H1 (cell line): ENCODE measurements at regions of chr22 and their contacts with region 1.

Region 1: DNA sequence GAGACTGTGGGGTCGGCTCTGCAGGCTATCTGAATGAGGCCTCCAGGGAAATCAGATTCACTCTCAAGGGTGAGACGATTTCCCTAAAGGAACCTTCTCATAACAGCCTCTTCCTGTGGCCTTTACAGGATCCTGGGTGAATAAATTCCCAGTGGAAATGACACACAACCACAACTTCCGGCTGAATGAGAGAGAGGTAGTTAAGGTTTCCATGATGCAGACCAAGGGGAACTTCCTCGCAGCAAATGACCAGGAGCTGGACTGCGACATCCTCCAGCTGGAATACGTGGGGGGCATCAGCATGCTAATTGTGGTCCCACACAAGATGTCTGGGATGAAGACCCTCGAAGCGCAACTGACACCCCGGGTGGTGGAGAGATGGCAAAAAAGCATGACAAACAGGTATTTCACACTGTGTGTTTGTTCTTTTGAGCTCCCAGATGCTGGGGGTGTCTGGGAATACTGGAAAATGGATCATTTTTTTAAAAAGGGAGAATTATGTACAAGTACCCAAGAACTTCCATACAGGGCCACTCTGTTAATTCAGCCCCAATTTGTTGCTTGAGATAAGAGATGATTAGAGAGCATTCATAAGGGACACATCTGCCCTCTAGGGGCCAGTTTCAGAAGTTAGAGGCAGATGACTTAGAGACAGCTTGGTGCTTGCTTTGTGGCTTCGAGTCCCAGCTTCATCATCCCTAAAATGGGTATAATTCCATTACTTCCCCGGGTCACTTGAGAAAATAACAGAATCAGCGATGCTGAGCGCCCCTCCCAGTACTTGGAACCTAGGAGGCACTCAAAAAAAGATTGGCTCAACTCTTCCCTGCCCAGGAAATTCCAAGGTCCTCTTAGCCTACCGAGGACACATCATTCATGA is 10.2 kb downstream of the SERPIND1 start:
- DNase-seq: peak in 1 of 2 experiments; percentile 56
- H3K4me3 ChIP-seq: no peak overlapping the region
- H3K27ac ChIP-seq: no peak overlapping the region
- H3K4me1 ChIP-seq: peaks cover 5 to 11% (median 6%) of the 10 kb centered on the region in 4 experiments; a peak in 5 of 7 replicates
- H3K27me3 ChIP-seq: no peaks in the 10 kb centered on the region
- CTCF ChIP-seq: peak; percentile 8 to 81 (median 73)
- EP300 ChIP-seq: no peak
- POLR2A ChIP-seq: no peak
- RAD21 ChIP-seq: peak; percentile 55 to 71

Region 2: DNA sequence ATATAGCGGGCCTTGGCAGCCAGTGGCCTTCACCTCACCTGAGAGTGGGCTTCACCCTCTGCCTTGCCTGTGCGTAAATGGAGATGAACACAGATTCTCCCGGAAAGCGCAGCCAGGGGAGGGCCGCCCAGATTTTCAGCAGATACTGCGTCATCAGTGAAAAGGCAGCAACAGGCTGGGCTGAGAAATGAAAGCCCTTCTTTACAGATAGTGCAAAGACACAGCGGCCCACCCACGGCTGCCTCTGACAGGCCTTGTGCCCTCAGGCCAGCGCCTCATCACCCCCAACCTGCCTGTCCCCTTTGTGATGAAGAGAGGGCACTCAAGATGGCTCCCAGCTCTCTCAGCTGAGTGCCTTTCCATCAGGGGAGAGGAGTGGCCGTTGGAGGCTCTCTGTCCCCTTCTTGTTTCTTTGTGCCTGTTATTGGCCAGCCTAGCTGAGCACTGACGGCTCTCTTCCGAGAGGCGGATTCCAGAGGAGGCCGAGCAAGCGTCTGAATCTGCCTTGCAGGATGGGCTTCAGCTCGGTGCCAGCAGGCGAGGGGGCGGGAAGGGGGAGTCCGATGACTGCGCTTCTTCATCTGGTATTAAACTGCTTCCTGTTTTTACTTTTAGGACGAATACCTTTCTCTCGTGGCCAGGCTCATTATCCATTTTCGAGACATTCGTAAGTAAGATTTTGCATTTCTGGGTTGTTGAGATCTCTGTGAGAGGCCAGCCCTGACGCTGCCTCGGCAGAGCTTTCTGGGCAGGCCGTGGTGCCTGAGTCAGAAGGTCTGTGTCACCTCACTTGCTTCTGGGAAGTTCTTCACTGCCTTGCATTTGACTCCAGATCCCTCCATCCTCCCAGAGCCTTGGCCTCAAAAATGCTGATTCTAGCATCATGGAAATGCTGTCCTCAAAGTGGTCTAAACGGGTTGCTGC is 233.0 kb before region 1 on chr22:
- CTCF ChIA-PET with region 1: no interaction called
- POLR2A ChIA-PET with region 1: no interaction called
- DNase-seq: no peak
- H3K4me3 ChIP-seq: no peak overlapping the region
- H3K27ac ChIP-seq: no peak overlapping the region
- H3K4me1 ChIP-seq: peaks cover 2 to 12% (median 5%) of the 10 kb centered on the region in 4 experiments; a peak in 6 of 7 replicates
- H3K27me3 ChIP-seq: no peaks in the 10 kb centered on the region
- CTCF ChIP-seq: no peak
- EP300 ChIP-seq: no peak
- POLR2A ChIP-seq: no peak
- RAD21 ChIP-seq: no peak

Region 3: GRCh38 chr22:20671409-20672081 is 112.5 kb before region 1 on chr22:
- CTCF ChIA-PET with region 1: no interaction called
- POLR2A ChIA-PET with region 1: no interaction called
- DNase-seq: peak in 1 of 2 experiments; percentile 16
- H3K4me3 ChIP-seq: no peak overlapping the region
- H3K27ac ChIP-seq: no peak overlapping the region
- H3K4me1 ChIP-seq: no peaks in the 10 kb centered on the region
- H3K27me3 ChIP-seq: no peaks in the 10 kb centered on the region
- CTCF ChIP-seq: no peak
- EP300 ChIP-seq: no peak
- POLR2A ChIP-seq: no peak
- RAD21 ChIP-seq: no peak

Region 4: DNA sequence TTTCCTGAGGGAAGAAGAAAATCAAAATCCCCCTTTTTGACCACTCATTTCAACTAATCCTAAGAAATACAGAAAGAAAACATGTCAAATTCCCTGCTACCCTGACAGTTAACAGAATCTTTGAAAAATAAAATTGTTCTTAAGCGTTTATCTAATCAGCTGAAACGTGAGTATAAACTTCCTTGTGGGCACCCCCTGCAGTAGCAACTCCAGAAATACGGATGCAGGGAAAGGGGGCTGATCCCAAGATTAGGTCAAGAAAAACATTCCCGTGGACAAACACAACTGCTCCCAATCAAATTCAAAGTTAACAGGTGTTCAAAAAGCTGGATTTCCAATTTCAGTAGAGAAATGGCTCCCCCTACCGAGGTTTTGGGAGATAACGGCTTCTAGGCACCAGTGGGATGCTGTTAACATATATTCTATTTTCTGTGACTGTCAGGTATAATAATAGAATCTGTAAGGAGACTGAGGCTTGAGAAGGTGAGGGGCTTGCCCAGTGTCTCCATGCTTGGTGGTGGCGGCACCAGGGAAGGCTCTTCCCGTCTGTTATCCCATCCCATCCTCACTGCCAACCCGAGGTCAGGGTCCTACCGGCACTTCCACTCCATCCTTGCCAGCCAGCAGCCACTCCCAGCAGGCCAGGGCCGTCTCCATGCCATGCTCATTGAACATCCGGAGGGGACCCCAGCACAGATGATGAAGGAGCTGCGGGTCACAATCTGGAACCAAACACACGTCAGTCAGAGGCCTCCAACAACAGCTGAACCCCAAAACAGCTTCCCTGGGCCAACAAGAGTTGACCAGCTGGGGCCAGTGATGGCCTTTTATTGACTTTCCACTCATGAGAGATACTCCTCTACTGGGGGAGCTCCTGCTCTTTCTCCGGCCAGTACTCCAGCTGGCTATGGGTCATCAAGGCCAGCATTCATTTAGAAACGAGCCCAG is 42.2 kb before region 1 on chr22:
- CTCF ChIA-PET with region 1: interaction called, 10 read pairs
- POLR2A ChIA-PET with region 1: no interaction called
- DNase-seq: peak in 1 of 2 experiments; percentile 76
- H3K4me3 ChIP-seq: no peak overlapping the region
- H3K27ac ChIP-seq: no peak overlapping the region
- H3K4me1 ChIP-seq: no peaks in the 10 kb centered on the region
- H3K27me3 ChIP-seq: no peaks in the 10 kb centered on the region
- CTCF ChIP-seq: peak in 2 of 3 experiments; percentile 71 to 73; a peak in 3 of 4 replicates
- EP300 ChIP-seq: no peak
- POLR2A ChIP-seq: no peak
- RAD21 ChIP-seq: peak; percentile 76 to 79

Region 5: DNA sequence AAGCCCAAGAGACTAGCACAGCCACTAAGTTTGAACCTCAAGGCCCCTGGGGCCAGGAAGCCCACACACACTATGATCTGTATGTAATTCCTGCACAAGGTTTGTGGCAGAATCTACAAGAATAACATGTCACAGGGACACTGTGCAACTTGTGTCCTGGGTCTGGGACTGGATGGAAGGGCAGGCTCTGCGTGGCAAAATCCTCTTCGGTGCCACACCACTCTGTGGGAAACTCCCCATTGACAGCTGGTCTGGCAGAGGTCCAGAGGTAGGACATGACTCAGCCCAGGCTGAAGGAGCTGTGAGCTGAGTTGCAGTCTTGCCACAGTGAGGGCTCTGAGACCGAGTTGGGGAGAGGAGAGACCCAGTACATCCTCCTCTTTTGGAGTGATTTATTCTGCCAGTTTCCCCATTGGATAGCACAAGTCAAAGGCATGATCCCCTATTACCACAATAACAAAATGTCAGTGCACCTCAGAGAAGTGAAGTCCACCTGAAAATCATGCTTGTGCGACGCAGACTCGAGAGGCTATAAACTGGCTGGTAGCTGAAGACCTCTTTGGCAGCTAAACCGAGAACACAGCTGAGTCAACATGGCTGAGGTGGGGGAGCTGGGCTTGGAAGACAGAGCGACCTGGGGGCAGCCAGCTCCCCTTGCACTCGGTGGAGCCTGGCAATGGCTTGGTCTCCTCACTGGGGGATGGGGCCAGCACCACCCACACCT is 33.5 kb before region 1 on chr22:
- CTCF ChIA-PET with region 1: interaction called, 24 read pairs
- POLR2A ChIA-PET with region 1: no interaction called
- DNase-seq: no peak
- H3K4me3 ChIP-seq: no peak overlapping the region
- H3K27ac ChIP-seq: no peak overlapping the region
- H3K4me1 ChIP-seq: no peaks in the 10 kb centered on the region
- H3K27me3 ChIP-seq: no peaks in the 10 kb centered on the region
- CTCF ChIP-seq: no peak
- EP300 ChIP-seq: no peak
- POLR2A ChIP-seq: no peak
- RAD21 ChIP-seq: no peak

Region 6: DNA sequence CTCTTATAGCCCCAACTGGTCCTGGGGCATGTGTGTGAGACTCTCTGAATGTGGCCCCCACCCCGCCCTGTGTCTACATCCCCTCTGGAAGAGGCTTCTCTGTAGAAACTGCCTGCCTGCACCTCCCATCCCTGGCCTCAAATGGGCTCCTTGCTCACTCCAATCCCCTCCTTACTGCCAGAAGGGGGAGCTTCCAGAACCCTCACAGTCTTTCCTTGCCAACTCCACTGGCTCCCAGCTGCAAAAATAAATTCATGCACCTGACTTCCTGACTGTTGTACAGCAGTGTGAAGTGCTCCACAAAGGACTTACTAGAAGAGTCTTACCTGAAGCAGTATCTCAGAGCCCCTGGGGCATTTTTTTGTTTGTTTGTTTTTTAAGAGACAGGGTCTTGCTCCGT is 25.4 kb before region 1 on chr22:
- CTCF ChIA-PET with region 1: interaction called, 22 read pairs
- POLR2A ChIA-PET with region 1: no interaction called
- DNase-seq: no peak
- H3K4me3 ChIP-seq: no peak overlapping the region
- H3K27ac ChIP-seq: no peak overlapping the region
- H3K4me1 ChIP-seq: no peaks in the 10 kb centered on the region
- H3K27me3 ChIP-seq: no peaks in the 10 kb centered on the region
- CTCF ChIP-seq: peak; percentile 50 to 61 (median 60)
- EP300 ChIP-seq: no peak
- POLR2A ChIP-seq: no peak
- RAD21 ChIP-seq: peak; percentile 23 to 39; a peak in 3 of 4 replicates

Region 7: DNA sequence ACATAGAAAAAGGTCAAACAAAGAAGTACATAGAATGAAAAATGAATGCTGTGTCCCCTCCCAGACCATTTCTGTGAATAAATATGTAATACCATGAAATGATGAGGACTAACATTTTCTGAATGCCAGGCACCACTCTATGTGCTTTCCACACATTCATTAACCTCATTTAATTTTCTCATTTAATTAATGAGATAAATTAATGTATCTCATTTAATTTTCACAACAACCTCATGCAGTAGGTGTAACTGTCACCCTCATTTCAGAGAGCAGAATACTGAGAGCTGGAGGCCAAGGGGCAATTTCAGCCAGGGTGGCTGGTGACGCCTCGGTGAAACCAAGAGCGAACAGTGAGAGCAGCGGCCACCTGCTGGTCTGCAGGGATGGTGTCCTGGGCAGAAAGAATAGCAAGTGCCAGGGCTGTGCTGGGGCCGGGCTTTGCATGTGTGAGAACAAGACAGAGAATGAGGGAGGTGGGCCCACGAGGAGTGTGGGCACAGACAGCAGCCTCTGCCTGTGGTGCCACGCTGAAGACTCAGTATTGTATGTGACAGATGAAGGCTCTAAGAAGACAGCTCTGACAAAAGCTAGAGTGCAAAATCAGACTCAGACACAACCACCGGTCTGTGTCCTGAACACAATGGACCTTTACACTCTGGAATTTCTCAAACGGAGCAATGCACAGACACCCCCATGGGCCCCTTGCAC is 12.0 kb before region 1 on chr22:
- CTCF ChIA-PET with region 1: interaction called, 23 read pairs
- POLR2A ChIA-PET with region 1: no interaction called
- DNase-seq: no peak
- H3K4me3 ChIP-seq: no peak overlapping the region
- H3K27ac ChIP-seq: no peak overlapping the region
- H3K4me1 ChIP-seq: no peaks in the 10 kb centered on the region
- H3K27me3 ChIP-seq: no peaks in the 10 kb centered on the region
- CTCF ChIP-seq: peak; percentile 21 to 45 (median 33); a peak in 3 of 4 replicates
- EP300 ChIP-seq: no peak
- POLR2A ChIP-seq: no peak
- RAD21 ChIP-seq: no peak

Region 8: DNA sequence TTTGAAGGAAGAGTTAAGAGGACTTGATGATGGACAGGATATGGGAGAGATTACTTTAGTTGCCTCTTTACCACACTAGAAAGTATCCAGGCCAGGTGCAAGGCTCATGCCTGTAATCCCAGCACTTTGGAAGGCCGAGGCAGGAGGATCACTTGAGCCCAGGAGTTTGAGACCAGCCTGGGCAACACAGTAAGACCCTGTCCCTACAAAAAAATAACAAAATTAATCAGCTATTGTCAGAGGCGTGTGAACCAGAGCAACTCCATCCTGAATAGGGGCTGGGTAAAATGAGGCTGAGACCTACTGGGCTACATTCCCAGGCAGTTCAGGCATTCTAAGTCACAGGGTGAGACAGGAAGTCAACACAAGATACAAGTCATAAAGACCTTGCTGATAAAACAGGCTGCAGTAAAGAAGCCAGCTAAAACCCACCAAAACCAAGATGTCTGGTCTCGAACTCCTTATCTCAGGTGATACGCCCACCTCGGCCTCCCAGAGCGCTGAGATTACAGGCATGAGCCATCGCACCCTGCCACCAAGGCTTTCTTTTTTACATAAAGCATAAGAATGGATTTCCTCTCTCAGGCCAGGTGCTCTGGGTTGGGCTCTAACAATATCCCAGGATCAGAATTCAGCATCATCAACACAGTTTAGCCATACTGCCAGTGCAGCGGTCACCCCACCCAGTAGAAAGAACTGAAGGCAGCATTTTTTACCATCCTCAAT is 56.7 kb after region 1 on chr22:
- CTCF ChIA-PET with region 1: no interaction called
- POLR2A ChIA-PET with region 1: no interaction called
- DNase-seq: no peak
- H3K4me3 ChIP-seq: no peak overlapping the region
- H3K27ac ChIP-seq: no peak overlapping the region
- H3K4me1 ChIP-seq: peaks cover 1 to 11% (median 6%) of the 10 kb centered on the region in 4 experiments; a peak in 4 of 7 replicates
- H3K27me3 ChIP-seq: no peaks in the 10 kb centered on the region
- CTCF ChIP-seq: no peak
- EP300 ChIP-seq: no peak
- POLR2A ChIP-seq: no peak
- RAD21 ChIP-seq: no peak

Region 9: DNA sequence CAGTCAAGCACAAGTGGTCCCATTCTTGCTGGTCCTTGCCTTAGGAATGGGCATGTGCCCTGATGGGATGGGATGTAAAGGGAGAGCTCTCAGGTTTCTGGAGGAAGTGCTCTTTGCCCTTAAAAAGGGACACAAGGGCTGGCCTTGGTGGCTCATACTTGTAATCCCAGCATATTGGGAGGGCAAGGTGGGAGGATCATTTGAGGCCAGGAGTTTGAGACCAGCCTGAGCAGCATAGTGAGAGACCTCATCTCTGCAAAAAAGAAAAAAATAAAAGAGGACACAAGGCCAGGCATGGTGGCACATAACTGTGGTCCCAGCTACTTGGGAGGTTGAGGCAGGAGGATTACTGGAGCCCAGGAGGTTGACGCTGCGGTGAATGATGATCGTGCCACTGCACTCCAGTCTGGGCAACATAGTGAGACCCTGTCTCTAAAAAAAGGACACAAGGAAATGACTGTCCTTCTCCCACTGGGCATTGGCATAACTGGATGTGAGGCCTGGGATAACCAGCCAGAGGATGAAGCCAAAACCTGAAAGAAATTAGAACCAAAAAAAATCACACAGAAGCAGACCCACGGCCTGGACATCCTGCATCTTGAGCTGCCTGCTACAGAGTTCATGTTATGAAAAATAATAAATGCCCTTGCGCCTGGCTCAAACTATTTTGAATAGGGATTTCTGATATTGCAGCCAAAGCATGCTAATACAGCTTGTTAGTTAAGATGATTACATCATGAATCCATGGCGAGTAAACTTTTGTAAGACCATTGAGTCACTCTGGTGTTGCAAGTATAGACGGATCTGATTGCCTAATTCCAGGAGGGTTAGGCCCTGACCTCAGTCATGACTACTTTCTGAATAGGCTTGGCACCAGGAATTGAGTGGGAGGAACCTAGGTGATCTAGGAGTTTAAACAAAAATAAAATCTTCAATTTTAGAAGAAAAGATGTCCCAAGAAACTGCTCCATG is 120.2 kb after region 1 on chr22:
- CTCF ChIA-PET with region 1: no interaction called
- POLR2A ChIA-PET with region 1: no interaction called
- DNase-seq: no peak
- H3K4me3 ChIP-seq: no peak overlapping the region
- H3K27ac ChIP-seq: no peak overlapping the region
- H3K4me1 ChIP-seq: no peaks in the 10 kb centered on the region
- H3K27me3 ChIP-seq: no peaks in the 10 kb centered on the region; a peak in 1 of 7 replicates
- CTCF ChIP-seq: no peak
- EP300 ChIP-seq: no peak
- POLR2A ChIP-seq: no peak
- RAD21 ChIP-seq: no peak